Activated CD8-positive, alpha-beta T cell treated with anti-CD3 and anti-CD28 coated beads, Interleukin-2, amount 10 ng/mL, durations not matched to agents 7 days and 5 days (primary cell): ENCODE measurements at regions of chr7 and their contacts with region 1.

Region 1: GRCh38 chr7:992709-993607 is 10.0 kb downstream of the CYP2W1 start:
- DNase-seq: peak; percentile 96
- ATAC-seq: peak; percentile 99
- H3K4me3 Mint-ChIP-seq: no peak overlapping the region
- H3K27ac Mint-ChIP-seq: peak overlapping the region; percentile 57
- H3K4me1 Mint-ChIP-seq: peaks cover 4% of the 10 kb centered on the region
- H3K27me3 Mint-ChIP-seq: no peaks in the 10 kb centered on the region

Region 2: GRCh38 chr7:1004018-1004852 is 11.3 kb after region 1 on chr7:
- CTCF ChIA-PET with region 1: interaction called, 12 read pairs
- POLR2A ChIA-PET with region 1: no interaction called
- DNase-seq: no peak
- ATAC-seq: no peak
- H3K4me3 Mint-ChIP-seq: no peak overlapping the region
- H3K27ac Mint-ChIP-seq: no peak overlapping the region
- H3K4me1 Mint-ChIP-seq: no peaks in the 10 kb centered on the region
- H3K27me3 Mint-ChIP-seq: no peaks in the 10 kb centered on the region

Region 3: GRCh38 chr7:1053002-1053478 is 60.1 kb after region 1 on chr7:
- CTCF ChIA-PET with region 1: interaction called, 19 read pairs
- POLR2A ChIA-PET with region 1: no interaction called
- DNase-seq: no peak
- ATAC-seq: no peak
- H3K4me3 Mint-ChIP-seq: no peak overlapping the region
- H3K27ac Mint-ChIP-seq: no peak overlapping the region
- H3K4me1 Mint-ChIP-seq: peaks cover 37% of the 10 kb centered on the region
- H3K27me3 Mint-ChIP-seq: no peaks in the 10 kb centered on the region

Region 4: DNA sequence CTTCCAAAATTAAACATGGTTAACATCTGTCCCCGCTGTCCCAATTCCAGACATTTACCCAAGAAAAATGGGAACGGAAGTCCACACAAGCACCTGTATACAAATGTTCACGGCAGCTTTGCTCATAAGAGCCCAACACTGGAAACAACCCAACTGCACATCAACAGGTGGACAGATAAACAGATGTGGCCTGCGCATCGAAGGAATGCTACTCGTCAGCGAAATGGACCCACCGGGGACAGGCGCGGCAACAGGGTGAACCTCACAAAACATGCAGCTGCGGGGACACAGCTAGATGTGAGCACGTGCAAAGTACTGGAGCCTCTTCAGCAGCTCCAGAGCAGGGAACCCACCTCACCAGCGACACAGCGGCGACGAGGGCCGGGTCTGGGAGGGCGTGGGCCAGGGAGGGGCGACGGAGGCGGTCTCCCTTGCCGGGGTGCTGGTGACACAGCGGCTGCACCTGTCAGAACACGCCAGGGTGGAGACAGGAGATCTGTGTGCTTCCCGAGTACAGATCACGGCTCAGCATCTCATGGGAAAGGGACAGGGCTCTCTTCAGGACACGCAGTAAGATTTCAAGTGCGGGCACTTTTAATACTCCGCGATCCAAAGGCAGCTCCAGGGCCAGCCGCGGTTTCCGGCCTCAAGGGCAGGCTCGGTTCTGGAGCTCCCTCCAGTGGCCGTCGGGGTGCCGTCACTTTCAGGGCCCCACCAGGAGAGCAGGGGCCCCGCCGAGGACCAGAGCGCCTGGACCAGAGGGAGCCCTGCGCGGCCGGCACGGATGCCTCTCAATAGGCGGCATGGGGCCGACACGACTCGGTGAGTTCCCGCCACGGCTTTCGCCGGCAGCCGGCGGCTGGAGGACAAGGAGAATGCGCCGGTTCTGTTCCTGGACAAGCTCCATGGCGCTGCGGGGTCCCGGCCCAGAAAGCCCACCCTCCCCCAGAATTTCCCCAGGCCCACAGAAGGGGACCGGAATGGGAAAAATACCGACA is 72.6 kb after region 1 on chr7:
- CTCF ChIA-PET with region 1: interaction called, 176 read pairs
- POLR2A ChIA-PET with region 1: interaction called, 4 read pairs
- DNase-seq: peak; percentile 88
- ATAC-seq: peak; percentile 98
- H3K4me3 Mint-ChIP-seq: peak overlapping the region; percentile 31
- H3K27ac Mint-ChIP-seq: no peak overlapping the region
- H3K4me1 Mint-ChIP-seq: peaks cover 6% of the 10 kb centered on the region
- H3K27me3 Mint-ChIP-seq: no peaks in the 10 kb centered on the region

Region 5: GRCh38 chr7:1137510-1138167 is 144.7 kb after region 1 on chr7:
- CTCF ChIA-PET with region 1: interaction called, 23 read pairs
- POLR2A ChIA-PET with region 1: no interaction called
- DNase-seq: peak; percentile 38
- ATAC-seq: peak; percentile 78
- H3K4me3 Mint-ChIP-seq: peak overlapping the region; percentile 80
- H3K27ac Mint-ChIP-seq: peak overlapping the region; percentile 92
- H3K4me1 Mint-ChIP-seq: peaks cover 21% of the 10 kb centered on the region
- H3K27me3 Mint-ChIP-seq: no peaks in the 10 kb centered on the region

Region 6: DNA sequence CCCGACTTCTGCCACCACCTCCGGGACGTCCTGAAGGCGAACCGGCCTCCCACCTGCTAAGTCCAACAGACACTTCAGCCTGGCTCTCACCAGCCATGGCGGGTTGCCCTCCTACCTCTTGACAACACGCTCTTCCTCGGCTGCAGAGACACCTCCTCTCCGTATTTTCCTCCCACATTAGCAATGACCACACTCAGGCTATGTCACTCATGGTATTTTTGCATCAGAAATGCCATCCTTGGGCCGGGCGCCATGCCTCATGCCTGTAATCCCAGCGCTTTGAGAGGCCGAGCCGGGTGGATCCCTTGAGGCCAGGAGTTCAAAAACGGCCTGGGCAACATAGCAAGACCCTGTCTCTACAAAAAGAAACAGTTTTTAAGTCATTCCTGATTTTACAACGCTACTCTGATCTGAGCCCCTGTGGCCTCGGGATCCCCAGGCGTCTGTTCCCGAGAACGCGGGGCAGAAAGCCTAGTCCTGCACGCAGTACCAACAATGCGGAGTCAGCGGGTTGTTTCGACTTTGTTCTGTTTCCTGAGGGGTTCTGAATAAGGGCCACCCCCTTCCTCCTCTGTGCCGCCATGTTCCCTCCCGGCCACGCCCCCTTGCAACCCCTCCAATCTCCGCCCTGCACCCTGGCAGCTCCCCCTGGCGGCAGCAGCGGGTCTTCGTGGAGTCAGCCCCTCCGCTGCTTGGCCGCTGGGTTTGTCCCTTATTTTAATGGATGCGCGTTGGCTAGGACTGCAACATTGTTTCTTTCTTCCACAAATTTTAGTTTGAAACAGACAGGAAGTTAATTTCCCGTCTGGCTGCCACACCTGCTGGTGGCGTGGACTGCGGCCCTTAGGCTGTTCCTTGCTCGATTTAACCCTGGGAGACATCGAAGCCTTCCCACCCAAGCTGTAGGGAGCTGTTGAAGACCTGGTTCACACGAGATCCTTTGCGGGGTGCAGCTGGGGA is 176.7 kb after region 1 on chr7:
- CTCF ChIA-PET with region 1: interaction called, 75 read pairs
- POLR2A ChIA-PET with region 1: interaction called, 4 read pairs
- DNase-seq: peak; percentile 95
- ATAC-seq: peak; percentile 97
- H3K4me3 Mint-ChIP-seq: peak overlapping the region; percentile 77
- H3K27ac Mint-ChIP-seq: peak overlapping the region; percentile 89
- H3K4me1 Mint-ChIP-seq: peaks cover 18% of the 10 kb centered on the region
- H3K27me3 Mint-ChIP-seq: no peaks in the 10 kb centered on the region

Region 7: DNA sequence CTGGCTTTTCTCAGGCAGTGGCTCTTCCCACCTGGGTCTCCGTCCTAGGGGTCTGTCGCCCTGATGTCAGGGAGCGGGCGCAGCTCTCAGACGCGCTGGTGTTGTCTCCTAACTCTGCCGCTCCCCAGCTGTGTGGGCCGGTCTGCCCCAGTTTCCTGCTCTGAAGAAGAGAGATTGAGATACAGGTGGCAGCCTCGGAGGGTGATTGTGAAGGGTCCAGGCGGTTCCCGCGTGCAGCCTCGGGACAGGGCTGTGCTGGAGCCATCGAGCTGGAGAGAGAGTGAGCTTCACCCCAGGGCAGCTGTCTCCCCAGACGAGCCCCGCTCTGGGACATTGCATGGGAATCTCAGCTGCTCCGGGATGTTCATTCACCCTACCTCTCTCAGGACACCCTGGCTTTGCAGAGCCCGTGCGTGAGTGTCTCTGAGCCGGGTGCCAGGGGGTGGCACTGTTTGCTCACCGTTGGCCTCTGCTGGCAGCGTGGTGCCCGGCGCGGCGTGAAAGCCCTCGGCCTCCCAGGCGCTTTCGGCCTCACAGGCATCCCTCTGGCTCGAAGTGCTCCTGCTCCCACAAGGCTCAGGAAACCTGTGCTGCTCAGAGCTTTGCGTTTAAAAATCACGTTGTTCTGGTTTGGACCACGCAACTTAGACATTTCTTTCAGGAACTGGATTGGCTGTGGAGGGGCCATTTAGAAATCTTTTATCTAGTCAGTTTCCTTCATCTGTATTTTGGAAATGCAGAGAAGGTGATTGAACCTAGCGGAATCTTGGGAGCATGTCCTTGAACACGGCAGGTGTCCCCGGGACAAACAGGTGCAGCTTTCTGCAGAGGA is 200.9 kb after region 1 on chr7:
- CTCF ChIA-PET with region 1: interaction called, 17 read pairs
- POLR2A ChIA-PET with region 1: no interaction called
- DNase-seq: peak; percentile 59
- ATAC-seq: peak; percentile 77
- H3K4me3 Mint-ChIP-seq: no peak overlapping the region
- H3K27ac Mint-ChIP-seq: no peak overlapping the region
- H3K4me1 Mint-ChIP-seq: peaks cover 36% of the 10 kb centered on the region
- H3K27me3 Mint-ChIP-seq: peaks cover 9% of the 10 kb centered on the region

Region 8: GRCh38 chr7:1268738-1269313 is 275.9 kb after region 1 on chr7:
- CTCF ChIA-PET with region 1: no interaction called
- POLR2A ChIA-PET with region 1: no interaction called
- DNase-seq: no peak
- ATAC-seq: no peak
- H3K4me3 Mint-ChIP-seq: no peak overlapping the region
- H3K27ac Mint-ChIP-seq: no peak overlapping the region
- H3K4me1 Mint-ChIP-seq: no peaks in the 10 kb centered on the region
- H3K27me3 Mint-ChIP-seq: peaks cover 12% of the 10 kb centered on the region